ENCODE measurements at regions of chr15 and their contacts with region 1.

Region 1: DNA sequence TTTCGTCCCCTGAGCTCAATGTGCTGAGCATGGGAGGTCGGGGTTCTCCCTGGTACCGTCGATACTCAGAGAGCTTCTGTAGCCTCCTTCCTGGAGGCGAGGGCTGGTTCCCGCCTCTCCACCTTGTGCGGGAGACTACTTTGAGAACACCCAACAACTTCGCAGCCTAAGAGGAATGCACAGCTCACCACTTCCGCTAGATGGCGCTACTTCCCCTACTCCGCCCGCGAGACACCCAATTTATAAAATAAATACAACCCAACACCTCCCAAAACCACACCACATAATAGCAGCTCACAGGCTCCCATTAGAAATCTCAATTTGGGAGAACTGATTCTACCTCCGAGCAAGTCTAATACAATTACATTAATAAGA is 1.2 kb downstream of the RGMA start:
- DNase-seq: peak; percentile 72 to 76
- ATAC-seq: peak; percentile 60 to 81
- H3K4me3 ChIP-seq: peak overlapping the region; percentile 45
- H3K27ac ChIP-seq: peak overlapping the region in 1 of 2 experiments; percentile 15; a peak in 1 of 6 replicates
- H3K4me1 ChIP-seq: peaks cover 16% of the 10 kb centered on the region
- CTCF ChIP-seq: peak; percentile 97
- EP300 ChIP-seq: no peak
- POLR2A ChIP-seq: no peak
- RAD21 ChIP-seq: peak; percentile 82 to 88

Region 2: DNA sequence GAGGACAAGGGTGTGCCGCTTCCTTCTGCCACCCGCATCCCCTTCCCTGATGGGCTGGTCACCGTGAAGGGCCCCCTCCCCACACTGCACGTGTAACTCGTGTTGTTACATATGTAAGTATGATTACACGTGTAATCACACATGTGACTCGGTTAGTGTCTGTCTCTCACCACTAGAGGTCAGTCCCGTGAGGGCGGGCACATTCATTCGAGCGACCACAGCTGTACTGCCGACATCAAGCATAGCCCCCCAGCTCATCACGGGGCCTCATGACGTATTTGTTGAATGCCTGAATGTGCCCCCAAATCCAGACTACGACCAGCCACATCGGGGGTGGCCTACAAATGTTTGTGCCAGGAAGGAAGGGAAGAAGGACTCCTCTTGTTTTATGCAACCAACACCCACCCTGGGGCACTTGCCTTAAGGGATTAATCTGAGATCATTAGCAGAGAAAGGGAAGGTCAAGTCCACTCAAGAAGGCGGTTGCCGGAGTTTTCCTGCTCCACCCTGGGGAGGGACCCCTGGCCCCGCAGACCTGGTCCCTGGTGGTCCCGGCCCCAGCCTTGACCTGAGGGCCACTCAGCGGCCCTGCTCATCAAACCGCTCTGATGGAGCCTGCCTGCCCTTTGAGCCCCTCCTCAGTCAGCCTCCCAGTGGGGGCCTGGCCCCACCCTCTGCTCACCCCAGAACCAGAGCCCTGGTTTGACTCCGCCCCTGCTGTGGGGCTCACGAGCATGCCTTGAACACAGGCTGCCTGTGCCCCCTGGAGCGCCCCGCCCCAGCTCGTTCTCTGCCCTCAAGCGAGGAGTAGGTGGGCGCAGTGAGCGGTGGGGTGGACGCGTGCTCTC is 51.6 kb before region 1 on chr15:
- CTCF ChIA-PET with region 1: interaction called, 12 read pairs
- POLR2A ChIA-PET with region 1: no interaction called
- DNase-seq: peak; percentile 61 to 87
- ATAC-seq: peak; percentile 62 to 75
- H3K4me3 ChIP-seq: no peak overlapping the region
- H3K27ac ChIP-seq: 0 out of 6 replicates have a peak overlapping the region, but pooled peaks of 1 of the 2 experiments have one; percentile 18
- H3K4me1 ChIP-seq: no peaks in the 10 kb centered on the region
- CTCF ChIP-seq: peak; percentile 69
- EP300 ChIP-seq: no peak
- POLR2A ChIP-seq: no peak
- RAD21 ChIP-seq: peak; percentile 43 to 46

Region 3: DNA sequence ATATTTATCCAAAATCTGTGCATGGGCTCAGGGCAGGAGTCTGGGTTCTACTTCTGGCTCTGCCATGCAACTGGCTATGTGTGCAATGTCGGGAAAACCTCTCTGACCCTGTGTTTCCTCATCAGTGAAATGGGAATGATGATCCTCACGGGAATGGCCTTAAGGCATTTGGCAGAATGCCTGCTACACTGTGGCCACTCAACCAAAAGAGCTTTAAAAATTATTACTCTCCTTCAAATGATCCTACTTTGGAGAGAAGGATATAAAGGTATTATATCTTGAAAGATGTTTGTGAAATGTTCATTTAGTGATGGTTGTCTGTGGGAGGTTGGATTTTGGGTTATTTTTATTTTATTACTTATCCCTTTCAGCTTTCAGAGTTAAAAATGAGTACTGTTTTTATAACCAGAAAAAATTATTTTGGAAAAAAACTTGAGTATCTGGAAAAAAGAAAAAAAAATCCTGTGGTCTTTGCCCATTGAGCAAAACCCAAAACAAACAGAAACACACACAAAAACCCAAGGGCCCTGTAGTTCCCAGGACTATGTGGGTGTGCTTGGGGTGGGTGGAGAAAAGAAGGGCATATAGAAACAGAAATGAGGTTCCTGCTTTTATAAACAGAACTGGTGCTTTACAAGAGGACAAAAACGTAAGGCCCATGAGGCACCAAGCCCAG is 20.8 kb before region 1 on chr15:
- CTCF ChIA-PET with region 1: interaction called, 14 read pairs
- POLR2A ChIA-PET with region 1: no interaction called
- DNase-seq: no peak
- ATAC-seq: no peak
- H3K4me3 ChIP-seq: no peak overlapping the region
- H3K27ac ChIP-seq: no peak overlapping the region
- H3K4me1 ChIP-seq: peaks cover 4% of the 10 kb centered on the region
- CTCF ChIP-seq: no peak
- EP300 ChIP-seq: no peak
- POLR2A ChIP-seq: no peak
- RAD21 ChIP-seq: no peak

Region 4: GRCh38 chr15:93102211-93102610 is 14.4 kb after region 1 on chr15:
- CTCF ChIA-PET with region 1: interaction called, 51 read pairs
- POLR2A ChIA-PET with region 1: no interaction called
- DNase-seq: no peak
- ATAC-seq: peak in 1 of 2 experiments; percentile 35; a peak in 1 of 6 replicates
- H3K4me3 ChIP-seq: no peak overlapping the region
- H3K27ac ChIP-seq: no peak overlapping the region
- H3K4me1 ChIP-seq: no peaks in the 10 kb centered on the region
- CTCF ChIP-seq: no peak
- EP300 ChIP-seq: no peak
- POLR2A ChIP-seq: no peak
- RAD21 ChIP-seq: no peak

Region 5: GRCh38 chr15:93121973-93122910 is 34.4 kb after region 1 on chr15:
- CTCF ChIA-PET with region 1: interaction called, 10 read pairs
- POLR2A ChIA-PET with region 1: no interaction called
- DNase-seq: no peak
- ATAC-seq: no peak
- H3K4me3 ChIP-seq: no peak overlapping the region
- H3K27ac ChIP-seq: no peak overlapping the region
- H3K4me1 ChIP-seq: no peaks in the 10 kb centered on the region
- CTCF ChIP-seq: no peak
- EP300 ChIP-seq: no peak
- POLR2A ChIP-seq: no peak
- RAD21 ChIP-seq: no peak